ENCODE measurements at regions of chr2 and their contacts with region 1.

Region 1: DNA sequence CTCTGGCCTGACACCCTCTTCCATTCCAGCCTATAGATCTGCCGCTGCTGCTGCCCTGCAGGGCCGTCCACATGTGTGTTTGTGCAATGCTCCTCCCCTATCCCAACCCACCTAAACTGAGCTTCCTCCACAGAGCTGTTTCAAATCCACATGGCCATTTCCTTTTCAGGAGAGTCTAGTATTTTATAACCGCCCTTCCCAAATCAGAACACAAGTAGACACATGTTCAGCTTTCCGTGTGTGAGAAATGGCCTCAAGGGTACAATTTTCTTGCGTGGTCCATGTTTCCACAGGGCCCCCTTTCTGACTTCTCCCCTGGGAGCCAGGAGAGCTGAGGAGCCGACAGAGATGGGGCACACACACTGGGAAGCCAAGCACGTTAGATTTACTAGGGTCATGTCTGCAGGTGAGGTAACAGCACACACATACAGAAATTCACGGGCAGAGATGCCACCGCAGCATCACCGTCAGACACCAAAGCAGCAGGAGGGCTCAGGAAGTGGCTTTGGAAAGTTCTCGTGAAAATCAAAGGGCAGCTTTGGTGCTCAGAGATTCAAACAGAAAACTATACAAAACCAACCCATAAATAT is 102.9 kb upstream of the TGFA start:
- DNase-seq: no peak
- ATAC-seq: no peak

Region 2: DNA sequence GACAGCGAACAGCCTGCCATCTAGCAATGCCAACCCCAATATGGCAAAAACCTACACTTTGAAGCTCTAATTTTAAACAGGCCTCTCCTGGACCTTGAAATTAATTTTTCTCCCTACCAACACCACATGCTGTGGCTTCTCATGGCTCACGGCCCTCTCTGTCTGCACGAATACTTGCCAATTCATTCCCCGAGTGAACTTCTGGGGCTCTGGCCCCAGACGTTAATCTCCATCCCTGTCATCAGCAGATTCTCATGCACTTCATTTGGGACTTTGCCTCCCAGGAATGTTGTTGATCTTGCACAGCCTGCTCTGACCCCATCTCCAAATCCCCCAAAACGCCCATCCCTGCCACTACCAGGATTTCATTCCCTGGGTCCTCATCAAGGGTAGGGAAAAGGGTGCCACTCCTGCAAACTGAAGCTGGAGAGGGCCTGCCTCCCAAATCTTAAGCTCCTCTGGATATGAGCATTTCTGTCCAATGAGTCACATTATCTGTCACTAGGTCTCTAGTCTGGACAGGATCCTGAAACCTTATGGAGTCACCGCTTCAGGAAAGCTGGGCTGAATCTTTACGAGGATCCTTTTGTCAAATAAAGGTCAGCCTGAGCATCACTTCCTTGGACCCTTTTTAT is 123.5 kb after region 1 on chr2:
- intact Hi-C with region 1: loop called (anchors 5 kb)
- DNase-seq: no peak
- ATAC-seq: no peak

Measured in left cardiac atrium (tissue), 4 donors.